ENCODE measurements at regions of chr2 and their contacts with region 1.

Region 1: GRCh38 chr2:148739454-148740105 is 95.0 kb downstream of the EPC2 start:
- DNase-seq: no peak
- H3K4me3 ChIP-seq: no peak overlapping the region
- H3K27ac ChIP-seq: no peak overlapping the region
- H3K4me1 ChIP-seq: no peaks in the 10 kb centered on the region
- CTCF ChIP-seq: no peak

Region 2: GRCh38 chr2:148568597-148568996 is 171.0 kb before region 1 on chr2:
- CTCF ChIA-PET with region 1: no interaction called
- POLR2A ChIA-PET with region 1: no interaction called
- intact Hi-C with region 1: no loop called
- DNase-seq: no peak
- H3K4me3 ChIP-seq: no peak overlapping the region
- H3K27ac ChIP-seq: no peak overlapping the region
- H3K4me1 ChIP-seq: no peaks in the 10 kb centered on the region
- CTCF ChIP-seq: no peak

Region 3: GRCh38 chr2:148751907-148752306 is 12.3 kb after region 1 on chr2:
- CTCF ChIA-PET with region 1: no interaction called
- POLR2A ChIA-PET with region 1: interaction called, 12 read pairs
- intact Hi-C with region 1: no loop called
- DNase-seq: no peak
- H3K4me3 ChIP-seq: no peak overlapping the region
- H3K27ac ChIP-seq: no peak overlapping the region
- H3K4me1 ChIP-seq: no peaks in the 10 kb centered on the region
- CTCF ChIP-seq: no peak

Region 4: DNA sequence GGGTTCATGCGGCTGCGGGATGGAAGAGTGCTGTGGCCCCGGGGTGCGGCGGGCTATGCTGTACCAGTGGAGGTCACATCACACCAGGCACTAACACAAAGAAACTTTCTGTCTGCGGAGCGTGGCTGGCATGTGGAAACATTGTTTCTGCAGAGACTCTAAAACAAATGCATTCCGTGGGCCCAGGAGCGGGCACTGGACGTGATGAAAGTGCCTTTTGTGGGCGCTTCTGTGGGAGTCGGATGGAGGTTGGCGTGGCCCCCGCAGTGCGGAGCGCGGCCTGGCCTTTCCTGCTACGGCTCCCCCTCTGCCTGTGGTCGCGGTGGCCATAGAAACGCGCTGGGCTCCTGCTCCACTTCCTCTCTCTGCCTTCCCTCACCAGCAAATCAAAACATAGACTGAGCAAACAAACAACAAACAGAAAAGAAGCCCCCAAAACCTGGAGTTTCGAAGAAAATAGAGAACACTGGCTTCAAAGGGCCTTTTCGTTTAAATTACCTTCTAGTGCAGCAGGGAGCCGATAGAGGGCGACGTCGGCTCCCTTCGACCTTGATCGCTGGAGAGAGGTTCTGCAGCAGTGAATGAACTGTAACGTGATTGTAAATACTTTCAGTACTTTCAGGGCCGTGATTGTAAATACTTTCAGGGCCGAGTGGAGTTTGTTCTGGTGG is 186.8 kb after region 1 on chr2:
- CTCF ChIA-PET with region 1: no interaction called
- POLR2A ChIA-PET with region 1: no interaction called
- intact Hi-C with region 1: no loop called
- DNase-seq: peak; percentile 34
- H3K4me3 ChIP-seq: no peak overlapping the region
- H3K27ac ChIP-seq: no peak overlapping the region
- H3K4me1 ChIP-seq: no peaks in the 10 kb centered on the region
- CTCF ChIP-seq: peak; percentile 76

Region 5: DNA sequence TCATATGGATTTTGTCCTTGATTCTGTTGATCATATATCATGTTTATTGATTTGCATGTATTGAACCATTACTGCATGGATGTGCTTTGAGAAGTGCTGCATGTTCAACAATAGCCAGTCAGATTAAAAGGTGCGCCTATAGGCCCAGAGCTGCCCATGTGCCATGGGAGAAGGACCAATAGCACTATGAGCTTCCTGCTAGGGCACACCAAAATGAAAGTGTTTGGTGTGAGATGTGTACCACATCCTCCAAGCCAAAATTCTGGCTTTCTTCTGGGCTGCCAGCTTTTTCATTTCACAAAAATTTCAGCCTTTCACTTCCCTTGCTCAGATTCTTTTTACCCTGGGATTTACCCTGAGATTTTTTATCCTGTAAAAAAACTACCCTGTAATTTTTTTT is 882.8 kb after region 1 on chr2:
- CTCF ChIA-PET with region 1: no interaction called
- POLR2A ChIA-PET with region 1: no interaction called
- intact Hi-C with region 1: no loop called
- DNase-seq: no peak
- H3K4me3 ChIP-seq: no peak overlapping the region
- H3K27ac ChIP-seq: no peak overlapping the region
- H3K4me1 ChIP-seq: no peaks in the 10 kb centered on the region
- CTCF ChIP-seq: no peak